Mammary epithelial cell (primary cell): ENCODE measurements at regions of chr10 and their contacts with region 1.

Region 1: GRCh38 chr10:43218443-43219185 is 48.3 kb downstream of the RASGEF1A start:
- DNase-seq: peak; percentile 71
- H3K4me3 ChIP-seq: no peak overlapping the region
- H3K27ac ChIP-seq: no peak overlapping the region
- H3K4me1 ChIP-seq: peaks cover 12% of the 10 kb centered on the region
- H3K27me3 ChIP-seq: no peaks in the 10 kb centered on the region
- CTCF ChIP-seq: no peak

Region 2: GRCh38 chr10:43287056-43288007 is 68.7 kb after region 1 on chr10:
- CTCF ChIA-PET with region 1: no interaction called
- dilution Hi-C with region 1: loop called (anchors 5 kb)
- in situ Hi-C with region 1: no loop called
- intact Hi-C with region 1: no loop called
- DNase-seq: peak; percentile 83
- H3K4me3 ChIP-seq: no peak overlapping the region
- H3K27ac ChIP-seq: no peak overlapping the region
- H3K4me1 ChIP-seq: peaks cover 13% of the 10 kb centered on the region
- H3K27me3 ChIP-seq: no peaks in the 10 kb centered on the region
- CTCF ChIP-seq: no peak